ENCODE measurements at regions of chr19 and their contacts with region 1.

Region 1: DNA sequence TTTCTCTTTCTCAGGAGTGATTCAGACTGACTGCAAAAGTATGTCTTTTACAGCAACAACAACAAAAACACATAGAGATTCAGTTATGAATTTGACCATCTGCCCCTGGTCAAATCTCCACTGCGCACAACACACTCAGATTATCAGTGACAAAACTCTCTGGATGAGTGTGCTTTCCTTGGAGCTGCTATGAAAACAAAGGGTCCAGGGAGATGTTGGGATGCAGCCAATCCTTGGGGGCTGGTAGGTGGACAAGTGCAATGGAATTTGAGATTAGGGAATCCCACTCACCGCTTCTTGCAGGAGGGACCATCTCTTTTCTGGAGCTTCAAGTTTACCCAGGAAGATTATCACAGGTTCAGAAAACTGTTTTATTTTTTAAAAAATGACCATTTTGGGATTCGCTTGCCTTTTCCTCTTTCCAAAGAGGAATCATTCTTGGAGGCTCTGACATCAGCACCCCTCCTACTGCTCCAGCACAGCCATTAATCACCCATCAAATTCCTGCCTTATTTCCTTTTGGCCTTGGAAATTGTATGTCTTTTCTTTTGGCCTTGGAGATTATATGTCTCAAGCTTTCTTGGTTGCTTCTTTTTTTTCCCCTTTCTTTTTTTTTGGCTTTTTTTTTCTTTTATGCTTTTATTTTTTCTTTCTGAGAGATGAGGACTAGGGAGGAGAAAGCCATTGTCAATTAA is 311.8 kb downstream of the TSHZ3 start:
- DNase-seq: no peak
- H3K4me3 ChIP-seq: no peak overlapping the region
- H3K27ac ChIP-seq: peak overlapping the region in 1 of 4 donors; percentile 46
- H3K4me1 ChIP-seq: peaks cover 0 to 24% (median 21%) of the 10 kb centered on the region in 4 donors
- H3K27me3 ChIP-seq: no peaks in the 10 kb centered on the region
- CTCF ChIP-seq: no peak
- EP300 ChIP-seq: no peak
- POLR2A ChIP-seq: no peak

Region 2: GRCh38 chr19:30997222-30997621 is 40.2 kb before region 1 on chr19:
- intact Hi-C with region 1: no loop called
- DNase-seq: no peak
- H3K4me3 ChIP-seq: no peak overlapping the region
- H3K27ac ChIP-seq: no peak overlapping the region
- H3K4me1 ChIP-seq: no peaks in the 10 kb centered on the region
- H3K27me3 ChIP-seq: no peaks in the 10 kb centered on the region
- CTCF ChIP-seq: no peak
- EP300 ChIP-seq: no peak
- POLR2A ChIP-seq: no peak

Region 3: GRCh38 chr19:31092274-31092673 is 54.8 kb after region 1 on chr19:
- intact Hi-C with region 1: no loop called
- DNase-seq: no peak
- H3K4me3 ChIP-seq: no peak overlapping the region
- H3K27ac ChIP-seq: no peak overlapping the region
- H3K4me1 ChIP-seq: no peaks in the 10 kb centered on the region
- H3K27me3 ChIP-seq: no peaks in the 10 kb centered on the region
- CTCF ChIP-seq: no peak
- EP300 ChIP-seq: no peak
- POLR2A ChIP-seq: no peak

Region 4: DNA sequence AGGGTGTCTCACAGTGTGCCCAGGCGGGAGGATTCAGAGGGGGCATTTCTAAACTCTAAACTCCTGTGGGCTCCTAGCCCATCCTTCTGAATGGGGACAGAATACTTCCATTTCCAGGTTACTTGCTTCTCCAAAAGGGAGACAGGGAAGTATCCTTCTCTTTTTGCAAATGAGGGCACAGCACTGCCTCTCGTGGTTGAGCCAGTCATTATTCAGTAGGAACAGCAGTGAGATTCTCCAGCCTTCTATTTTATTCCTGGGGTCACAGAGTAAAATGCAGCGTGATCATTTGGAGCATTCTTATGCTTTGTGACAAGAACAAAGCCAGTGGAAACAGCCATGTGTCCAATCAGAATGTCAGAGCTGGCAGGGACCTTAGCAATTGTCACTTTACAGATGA is 327.5 kb after region 1 on chr19:
- intact Hi-C with region 1: loop called (anchors 10 kb)
- DNase-seq: no peak
- H3K4me3 ChIP-seq: no peak overlapping the region
- H3K27ac ChIP-seq: no peak overlapping the region
- H3K4me1 ChIP-seq: no peaks in the 10 kb centered on the region
- H3K27me3 ChIP-seq: no peaks in the 10 kb centered on the region
- CTCF ChIP-seq: no peak
- EP300 ChIP-seq: no peak
- POLR2A ChIP-seq: no peak